IMR-90 (cell line): ENCODE measurements at regions of chr11 and their contacts with region 1.

Region 1: DNA sequence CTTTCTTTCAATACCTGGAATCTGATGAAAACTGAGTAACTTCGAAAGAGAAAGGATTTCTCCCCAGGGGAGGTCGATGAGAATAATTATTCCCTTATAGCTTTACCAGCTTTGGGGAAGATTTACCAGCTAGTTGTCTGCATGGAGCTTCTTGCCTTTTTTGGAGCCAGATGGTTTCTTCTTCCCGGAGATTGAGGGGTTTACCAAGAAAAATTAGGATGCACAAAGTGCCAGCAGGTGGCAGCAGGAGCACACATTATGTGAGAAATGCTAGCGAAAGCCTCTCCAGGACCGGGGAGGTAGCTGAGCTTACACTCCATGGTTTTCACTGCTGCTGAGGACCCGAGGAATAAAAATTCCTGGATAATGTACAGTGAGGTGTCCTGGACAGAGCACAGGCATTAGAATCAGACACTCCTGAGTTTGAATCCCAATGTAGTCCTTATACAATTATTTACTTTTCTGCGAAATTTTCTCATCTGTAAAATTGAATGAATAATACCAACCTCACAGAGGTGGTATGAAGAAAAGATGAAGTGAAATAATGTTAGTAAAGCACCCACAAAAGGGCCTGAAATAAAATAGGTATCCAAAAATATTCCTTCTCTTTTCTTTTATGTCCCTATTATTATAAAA is 46.0 kb upstream of the PARVA start:
- DNase-seq: peak; percentile 88
- ATAC-seq: peak; percentile 97
- H3K4me3 ChIP-seq: no peak overlapping the region
- H3K27ac ChIP-seq: no peak overlapping the region
- H3K4me1 ChIP-seq: peaks cover 4% of the 10 kb centered on the region
- H3K27me3 ChIP-seq: no peaks in the 10 kb centered on the region
- CTCF ChIP-seq: peak; percentile 94
- POLR2A ChIP-seq: 0 out of 2 replicates have a peak, but pooled peaks have one; percentile 42
- RAD21 ChIP-seq: peak; percentile 98

Region 2: GRCh38 chr11:12377824-12378593 is 46.7 kb after region 1 on chr11:
- CTCF ChIA-PET with region 1: interaction called, 4 read pairs
- POLR2A ChIA-PET with region 1: no interaction called
- dilution Hi-C with region 1: no loop called
- in situ Hi-C with region 1: no loop called
- intact Hi-C with region 1: loop called (anchors 1 kb)
- DNase-seq: peak; percentile 71
- ATAC-seq: peak; percentile 73
- H3K4me3 ChIP-seq: peak overlapping the region; percentile 96
- H3K27ac ChIP-seq: peak overlapping the region; percentile 100
- H3K4me1 ChIP-seq: peaks cover 15% of the 10 kb centered on the region
- H3K27me3 ChIP-seq: no peaks in the 10 kb centered on the region
- CTCF ChIP-seq: peak; percentile 36
- POLR2A ChIP-seq: peak; percentile 82
- RAD21 ChIP-seq: 0 out of 2 replicates have a peak, but pooled peaks have one; percentile 15

Region 3: DNA sequence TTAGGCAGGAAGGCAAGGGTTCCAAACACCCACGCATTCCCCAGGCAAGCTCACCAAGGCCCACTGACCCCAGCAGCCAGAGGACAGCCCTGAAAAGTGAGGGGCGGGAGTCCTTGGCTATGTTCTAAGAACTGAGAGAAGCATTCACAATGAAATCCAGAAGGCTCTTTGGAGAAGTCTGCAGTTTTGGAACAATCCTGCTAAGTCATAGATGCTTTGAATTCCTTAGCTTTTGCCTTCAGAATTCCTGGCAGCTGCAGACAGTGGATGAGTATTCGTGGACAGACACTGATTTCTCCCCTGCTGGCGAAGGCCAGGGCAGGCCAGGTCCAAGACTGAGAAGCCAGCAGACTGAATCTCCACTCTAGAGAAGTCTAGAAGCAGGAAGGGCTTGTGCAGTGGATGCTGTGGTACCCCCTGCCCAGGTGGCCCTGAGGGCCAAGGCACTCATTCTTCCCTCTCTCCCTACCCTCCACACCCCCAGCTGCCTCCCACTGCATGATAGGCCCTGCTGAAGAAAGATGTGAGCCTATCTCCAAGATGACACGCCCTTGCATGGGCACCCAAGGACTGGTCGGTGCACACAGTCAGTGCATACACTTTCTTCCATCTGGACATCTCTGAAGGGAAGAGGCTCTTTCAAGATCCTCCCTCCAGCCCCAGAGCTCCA is 209.7 kb after region 1 on chr11:
- CTCF ChIA-PET with region 1: interaction called, 7 read pairs
- POLR2A ChIA-PET with region 1: no interaction called
- dilution Hi-C with region 1: no loop called
- in situ Hi-C with region 1: no loop called
- intact Hi-C with region 1: loop called (anchors 5 kb)
- DNase-seq: peak; percentile 94
- ATAC-seq: peak; percentile 71
- H3K4me3 ChIP-seq: no peak overlapping the region
- H3K27ac ChIP-seq: peak overlapping the region; percentile 95
- H3K4me1 ChIP-seq: peaks cover 45% of the 10 kb centered on the region
- H3K27me3 ChIP-seq: no peaks in the 10 kb centered on the region
- CTCF ChIP-seq: peak; percentile 42
- POLR2A ChIP-seq: no peak; the same call in 1 of the 2 replicates
- RAD21 ChIP-seq: peak; percentile 49

Region 4: GRCh38 chr11:12769834-12770345 is 438.5 kb after region 1 on chr11:
- CTCF ChIA-PET with region 1: no interaction called
- POLR2A ChIA-PET with region 1: no interaction called
- dilution Hi-C with region 1: no loop called
- in situ Hi-C with region 1: no loop called
- intact Hi-C with region 1: loop called (anchors 10 kb)
- DNase-seq: peak; percentile 75
- ATAC-seq: peak; percentile 63
- H3K4me3 ChIP-seq: no peak overlapping the region
- H3K27ac ChIP-seq: peak overlapping the region; percentile 82
- H3K4me1 ChIP-seq: peaks cover 43% of the 10 kb centered on the region
- H3K27me3 ChIP-seq: no peaks in the 10 kb centered on the region
- CTCF ChIP-seq: no peak
- POLR2A ChIP-seq: no peak
- RAD21 ChIP-seq: no peak

Region 5: GRCh38 chr11:12963792-12964536 is 632.6 kb after region 1 on chr11:
- CTCF ChIA-PET with region 1: interaction called, 6 read pairs
- POLR2A ChIA-PET with region 1: no interaction called
- dilution Hi-C with region 1: no loop called
- in situ Hi-C with region 1: no loop called
- intact Hi-C with region 1: loop called (anchors 5 kb)
- DNase-seq: peak; percentile 48
- ATAC-seq: peak; percentile 99
- H3K4me3 ChIP-seq: no peak overlapping the region
- H3K27ac ChIP-seq: no peak overlapping the region
- H3K4me1 ChIP-seq: no peaks in the 10 kb centered on the region
- H3K27me3 ChIP-seq: peaks cover 32% of the 10 kb centered on the region
- CTCF ChIP-seq: peak; percentile 95
- POLR2A ChIP-seq: no peak
- RAD21 ChIP-seq: peak; percentile 96